ENCODE measurements at regions of chr1 and their contacts with region 1.

Region 1: GRCh38 chr1:145963995-145964901 is at the starts of genes ANKRD34A and POLR3GL:
- DNase-seq: peak; percentile 88 to 92
- H3K4me3 ChIP-seq: peak within 1 kb of the TSS; percentile 65
- H3K27ac ChIP-seq: peak within 1 kb of the TSS; percentile 8; the same call in 1 of the 2 replicates
- H3K4me1 ChIP-seq: peaks cover 26% of the 10 kb centered on the region
- H3K27me3 ChIP-seq: peaks cover 8% of the 10 kb centered on the region; the same call in 1 of the 2 replicates
- CTCF ChIP-seq: no peak
- total RNA-seq, gene ANKRD34A: 0.33 and 0.50 TPM in 2 replicates
- total RNA-seq, gene POLR3GL: 7.2 and 10.6 TPM in 2 replicates

Region 2: DNA sequence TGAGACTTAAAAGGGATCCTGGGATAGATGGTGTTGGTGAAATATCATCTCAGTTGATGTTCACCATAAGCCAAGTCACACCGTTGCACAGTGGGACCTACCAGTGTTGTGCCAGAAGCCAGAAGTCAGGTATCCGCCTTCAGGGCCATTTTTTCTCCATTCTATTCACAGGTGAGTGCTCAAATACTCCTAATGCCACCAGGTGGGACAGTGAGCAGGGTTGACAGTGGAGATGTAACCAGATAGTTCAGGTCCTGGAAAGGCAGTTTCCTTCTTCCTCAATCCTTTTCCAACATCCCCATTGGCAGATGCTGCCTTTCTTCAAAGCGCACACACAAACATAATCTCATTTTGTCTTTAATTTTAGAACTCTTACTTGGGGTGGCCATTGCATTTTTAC is 233.3 kb before region 1 on chr1:
- CTCF ChIA-PET with region 1: no interaction called
- POLR2A ChIA-PET with region 1: interaction called, 14 read pairs
- intact Hi-C with region 1: no loop called
- DNase-seq: no peak
- H3K4me3 ChIP-seq: no peak overlapping the region
- H3K27ac ChIP-seq: no peak overlapping the region
- H3K4me1 ChIP-seq: no peaks in the 10 kb centered on the region
- H3K27me3 ChIP-seq: no peaks in the 10 kb centered on the region
- CTCF ChIP-seq: no peak; the same call in 1 of the 2 replicates

Region 3: DNA sequence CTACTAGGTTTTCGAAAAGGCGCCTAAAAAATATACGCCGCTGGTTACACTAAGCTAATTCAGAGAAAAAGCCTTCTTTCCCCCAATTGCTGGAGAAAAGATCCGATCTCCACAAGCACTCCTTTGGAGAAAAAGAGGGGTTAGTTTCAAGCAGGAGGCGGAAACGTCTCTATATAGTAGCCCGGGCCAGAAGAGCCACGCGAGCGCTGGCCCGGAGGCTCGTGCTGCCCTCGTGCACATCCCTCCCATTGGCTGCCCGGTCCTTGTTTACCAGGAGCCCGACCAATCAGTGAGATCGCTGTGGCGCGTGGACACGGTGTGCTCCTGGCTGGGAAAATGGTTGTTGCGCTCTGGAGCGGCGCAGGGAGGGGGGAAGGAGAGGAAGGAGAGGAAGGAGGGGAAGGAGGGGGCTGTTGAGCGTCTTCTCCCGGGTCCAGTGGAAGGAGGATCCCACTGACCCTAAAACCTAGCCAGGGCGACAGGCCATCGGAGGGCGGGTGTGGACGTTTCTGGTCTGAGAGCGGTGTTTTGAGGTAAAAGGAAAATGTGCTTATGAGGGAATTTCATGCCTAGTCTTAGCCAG is 32.3 kb after region 1 on chr1 and contains the start of gene TXNIP:
- CTCF ChIA-PET with region 1: interaction called, 3 read pairs
- POLR2A ChIA-PET with region 1: interaction called, 4 read pairs
- intact Hi-C with region 1: loop called (anchors 2 kb)
- DNase-seq: peak; percentile 93
- H3K4me3 ChIP-seq: peak within 1 kb of the TSS; percentile 93
- H3K27ac ChIP-seq: peak within 1 kb of the TSS; percentile 78
- H3K4me1 ChIP-seq: peaks cover 67% of the 10 kb centered on the region
- H3K27me3 ChIP-seq: no peaks in the 10 kb centered on the region
- CTCF ChIP-seq: no peak
- total RNA-seq, gene TXNIP: 95.7 and 131 TPM in 2 replicates

Region 4: DNA sequence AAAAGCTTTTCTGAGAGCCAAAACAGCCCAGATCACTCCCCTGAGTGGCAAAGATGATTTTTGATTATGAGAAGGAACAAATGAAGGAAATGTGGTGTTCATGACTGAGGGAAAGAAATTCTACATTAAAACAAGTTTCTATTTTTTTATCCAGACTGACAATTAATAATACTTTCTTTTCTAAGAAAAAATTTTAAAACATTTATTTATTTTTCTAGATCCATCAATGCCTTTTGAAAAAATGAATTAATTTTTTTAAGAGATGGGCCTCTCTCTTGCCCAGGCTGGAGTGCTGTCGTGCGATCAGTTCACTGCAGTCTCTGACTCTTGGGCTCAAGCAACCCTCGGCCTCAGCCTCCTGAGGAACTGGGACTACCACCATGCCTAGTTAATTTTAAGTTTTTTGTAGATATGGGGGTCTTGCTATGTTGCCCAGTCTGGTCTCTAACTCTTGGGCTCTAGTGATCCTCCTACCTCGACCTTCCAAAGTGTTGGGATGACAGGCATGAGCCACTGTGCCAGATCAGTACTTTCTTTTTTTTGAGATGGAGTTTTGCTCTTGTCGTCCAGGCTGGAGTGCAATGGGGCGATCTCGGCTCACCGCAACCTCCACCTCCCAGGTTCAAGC is 43.4 kb after region 1 on chr1:
- CTCF ChIA-PET with region 1: interaction called, 11 read pairs
- POLR2A ChIA-PET with region 1: no interaction called
- intact Hi-C with region 1: no loop called
- DNase-seq: no peak
- H3K4me3 ChIP-seq: no peak overlapping the region
- H3K27ac ChIP-seq: no peak overlapping the region
- H3K4me1 ChIP-seq: peaks cover 3% of the 10 kb centered on the region; the same call in 1 of the 2 replicates
- H3K27me3 ChIP-seq: no peaks in the 10 kb centered on the region
- CTCF ChIP-seq: peak; percentile 37; the same call in 1 of the 2 replicates

Region 5: DNA sequence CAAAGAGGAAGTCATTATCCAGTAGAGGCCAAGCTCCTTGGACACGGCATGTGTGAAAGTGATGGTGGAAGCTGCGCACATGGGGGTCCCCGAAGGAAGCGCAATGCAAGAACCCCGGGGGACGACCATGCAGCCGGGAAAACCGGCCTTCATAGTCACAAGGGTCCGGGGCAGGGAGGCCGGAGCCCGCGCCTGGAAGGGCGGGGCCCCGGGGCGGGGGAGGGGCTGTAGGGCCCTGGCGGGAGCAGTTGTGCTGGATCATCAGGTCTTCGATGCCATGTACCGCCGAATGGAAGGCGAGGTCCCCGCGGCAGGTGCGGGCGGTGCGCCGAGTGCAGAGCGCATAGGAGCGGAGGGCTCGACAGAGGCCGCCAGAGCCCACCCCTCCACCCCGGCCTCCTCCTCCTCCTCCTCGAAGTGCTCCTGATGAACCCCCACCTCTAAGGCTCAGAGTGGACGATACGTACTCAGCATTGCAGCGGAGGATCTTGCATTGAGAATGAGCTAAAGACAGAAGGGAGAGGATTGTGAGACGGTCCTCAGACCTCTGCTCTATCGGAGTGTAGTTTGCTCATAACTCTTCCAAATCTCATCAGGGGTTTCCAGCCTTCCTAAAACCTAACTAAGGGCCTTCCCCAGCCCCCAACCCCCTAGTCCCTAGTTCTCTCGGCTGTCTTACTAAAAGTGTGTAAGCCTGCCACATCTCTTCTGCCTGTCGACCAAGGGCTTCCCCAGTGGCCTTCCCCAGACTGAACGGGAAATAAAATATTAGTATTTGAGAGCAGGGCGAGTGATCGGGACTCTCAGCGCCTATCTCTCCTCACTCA is 55.2 kb after region 1 on chr1:
- CTCF ChIA-PET with region 1: no interaction called
- POLR2A ChIA-PET with region 1: no interaction called
- intact Hi-C with region 1: no loop called
- DNase-seq: no peak
- H3K4me3 ChIP-seq: no peak overlapping the region
- H3K27ac ChIP-seq: no peak overlapping the region
- H3K4me1 ChIP-seq: no peaks in the 10 kb centered on the region
- H3K27me3 ChIP-seq: peaks cover 8% of the 10 kb centered on the region; the same call in 1 of the 2 replicates
- CTCF ChIP-seq: no peak